Activated CD4-positive, alpha-beta T cell treated with anti-CD3 and anti-CD28 coated beads for 36 hours (primary cell): ENCODE measurements at regions of chr9 and their contacts with region 1.

Region 1: DNA sequence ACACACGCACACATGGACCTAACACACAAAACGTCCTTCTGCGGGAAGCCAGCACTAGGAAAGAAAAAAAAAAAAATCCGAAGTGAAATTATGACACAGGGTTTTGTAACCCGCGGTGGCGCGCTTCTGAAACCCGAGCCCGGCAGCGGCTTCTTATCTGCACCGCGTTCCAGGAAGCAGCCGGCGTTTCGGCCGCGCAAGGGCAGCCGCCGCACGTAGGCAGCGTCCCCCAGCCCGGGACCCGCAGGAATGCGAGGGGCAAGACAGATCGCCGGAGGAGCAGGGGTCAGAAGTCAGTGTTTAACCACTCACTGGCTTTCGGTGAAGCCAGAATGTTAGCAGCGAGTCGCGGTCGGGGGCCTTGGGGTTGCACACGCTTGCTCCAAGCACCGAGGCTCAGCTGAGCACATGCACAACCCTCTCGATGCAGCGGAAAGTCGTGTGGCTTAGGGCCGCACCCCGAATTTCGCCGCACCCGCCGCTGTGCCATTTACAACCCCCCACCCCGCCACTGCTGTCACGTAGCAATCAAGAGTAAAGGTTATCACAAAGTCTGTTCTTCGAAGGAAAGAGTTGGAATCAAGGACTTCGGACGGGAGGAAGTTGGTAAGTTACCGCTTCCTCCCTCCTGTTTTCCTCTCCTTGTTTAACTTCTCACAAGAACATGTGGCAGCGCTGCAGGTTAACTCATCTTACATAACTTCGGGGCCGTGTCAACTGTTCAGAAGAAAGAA is 167.9 kb downstream of the AUH start:
- DNase-seq: peak; percentile 92
- ATAC-seq: peak; percentile 62
- H3K4me3 Mint-ChIP-seq: peak overlapping the region; percentile 65
- H3K27ac Mint-ChIP-seq: peak overlapping the region; percentile 94
- H3K4me1 Mint-ChIP-seq: peaks cover 74% of the 10 kb centered on the region
- H3K27me3 Mint-ChIP-seq: no peaks in the 10 kb centered on the region

Region 2: GRCh38 chr9:90964101-90965020 is 229.5 kb before region 1 on chr9:
- CTCF ChIA-PET with region 1: interaction called, 3 read pairs
- POLR2A ChIA-PET with region 1: no interaction called
- intact Hi-C with region 1: loop called in 1 of 2 experiments (anchors 1 kb)
- DNase-seq: peak; percentile 48
- ATAC-seq: peak; percentile 47
- H3K4me3 Mint-ChIP-seq: no peak overlapping the region
- H3K27ac Mint-ChIP-seq: no peak overlapping the region
- H3K4me1 Mint-ChIP-seq: peaks cover 37% of the 10 kb centered on the region
- H3K27me3 Mint-ChIP-seq: peaks cover 26% of the 10 kb centered on the region

Region 3: DNA sequence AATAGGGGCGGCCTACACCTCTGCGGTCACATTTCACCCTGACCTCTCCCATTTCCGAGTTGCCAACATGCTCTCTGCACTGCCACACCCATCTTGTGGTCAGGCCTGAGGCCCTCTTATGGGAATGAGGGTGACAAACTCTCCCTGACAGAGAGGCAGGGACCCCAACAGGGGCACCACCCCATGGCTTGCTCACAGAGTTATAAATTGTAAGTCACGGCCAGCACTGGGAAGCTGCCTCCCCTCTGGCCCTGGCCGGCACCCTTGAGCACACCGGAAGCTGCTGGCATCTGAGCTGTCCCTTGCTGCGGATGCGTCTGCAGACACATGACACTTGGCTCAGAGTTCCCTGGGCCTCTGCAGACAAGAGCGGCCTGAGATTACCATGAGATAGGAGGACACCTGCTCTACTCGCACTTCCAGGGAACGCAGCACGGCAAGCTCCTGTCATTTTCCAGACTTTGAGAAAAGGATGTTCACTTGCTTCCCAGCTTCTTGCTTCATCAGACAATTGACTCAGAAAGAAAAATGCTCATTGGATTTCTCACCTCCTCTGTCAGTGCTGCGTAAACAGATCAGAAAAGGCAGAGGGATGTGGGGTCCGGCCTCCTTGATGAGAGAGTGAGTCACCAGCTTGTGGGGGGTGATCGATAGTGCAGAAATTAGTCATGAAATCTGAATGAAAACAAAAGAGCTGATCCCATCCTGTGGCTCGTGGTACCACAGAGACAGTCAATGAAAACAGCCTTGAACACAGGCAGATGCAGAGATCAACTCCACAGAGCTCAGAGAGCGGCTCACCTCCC is 122.4 kb before region 1 on chr9:
- CTCF ChIA-PET with region 1: interaction called, 4 read pairs
- POLR2A ChIA-PET with region 1: interaction called, 9 read pairs
- intact Hi-C with region 1: loop called in 1 of 2 experiments (anchors 1 kb)
- DNase-seq: peak; percentile 88
- ATAC-seq: peak; percentile 97
- H3K4me3 Mint-ChIP-seq: peak overlapping the region; percentile 37
- H3K27ac Mint-ChIP-seq: peak overlapping the region; percentile 97
- H3K4me1 Mint-ChIP-seq: peaks cover 24% of the 10 kb centered on the region
- H3K27me3 Mint-ChIP-seq: peaks cover 7% of the 10 kb centered on the region

Region 4: GRCh38 chr9:91164724-91165520 is 28.9 kb before region 1 on chr9:
- CTCF ChIA-PET with region 1: interaction called, 4 read pairs
- POLR2A ChIA-PET with region 1: interaction called, 14 read pairs
- intact Hi-C with region 1: loop called (anchors 1 kb)
- DNase-seq: peak; percentile 91
- ATAC-seq: peak; percentile 80
- H3K4me3 Mint-ChIP-seq: peak overlapping the region; percentile 67
- H3K27ac Mint-ChIP-seq: peak overlapping the region; percentile 95
- H3K4me1 Mint-ChIP-seq: peaks cover 47% of the 10 kb centered on the region
- H3K27me3 Mint-ChIP-seq: no peaks in the 10 kb centered on the region

Region 5: GRCh38 chr9:91346652-91347051 is 152.8 kb after region 1 on chr9:
- CTCF ChIA-PET with region 1: interaction called, 3 read pairs
- POLR2A ChIA-PET with region 1: no interaction called
- intact Hi-C with region 1: loop called in 1 of 2 experiments (anchors 5 kb)
- DNase-seq: no peak
- ATAC-seq: peak; percentile 65
- H3K4me3 Mint-ChIP-seq: no peak overlapping the region
- H3K27ac Mint-ChIP-seq: peak overlapping the region; percentile 3
- H3K4me1 Mint-ChIP-seq: peaks cover 56% of the 10 kb centered on the region
- H3K27me3 Mint-ChIP-seq: no peaks in the 10 kb centered on the region

Region 6: DNA sequence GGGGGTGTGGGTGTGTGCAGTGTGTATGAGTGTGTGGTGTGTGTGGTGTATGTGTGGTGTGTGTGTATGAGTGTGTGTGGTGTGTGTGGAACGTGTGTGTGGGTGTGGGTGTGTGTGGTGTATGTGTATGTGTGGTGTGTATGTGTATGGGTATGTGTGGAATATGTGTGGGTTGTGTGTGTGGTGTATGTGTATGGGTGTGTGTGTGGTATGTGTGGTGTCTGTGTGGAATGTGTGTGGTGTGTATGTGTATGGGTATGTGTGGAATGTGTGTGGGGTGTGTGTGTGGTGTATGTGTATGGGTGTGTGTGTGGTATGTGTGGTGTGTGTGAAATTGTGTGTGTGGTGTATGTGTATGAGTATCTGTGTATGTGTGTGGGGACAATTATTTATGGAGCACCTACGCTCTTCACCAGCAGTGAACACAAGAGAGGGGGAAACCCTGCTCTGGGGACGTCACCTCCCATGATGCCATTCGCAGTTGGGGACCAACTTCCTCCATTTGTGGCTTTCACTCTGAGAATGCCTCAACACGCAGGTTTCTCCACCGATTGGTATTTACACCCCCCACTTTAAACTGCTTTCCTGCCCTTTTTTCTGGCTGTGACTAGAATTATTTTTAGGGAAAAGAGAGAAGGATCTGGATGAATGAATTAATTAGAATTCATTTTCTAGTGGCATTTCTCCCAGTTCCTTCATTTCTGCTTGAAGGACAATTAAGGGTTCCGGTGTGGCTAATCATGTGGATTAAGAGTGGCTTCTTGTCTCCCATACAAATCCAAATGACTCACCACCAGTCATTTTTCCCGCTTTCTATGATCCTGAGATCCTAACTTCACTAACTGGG is 518.2 kb after region 1 on chr9:
- CTCF ChIA-PET with region 1: no interaction called
- POLR2A ChIA-PET with region 1: no interaction called
- intact Hi-C with region 1: loop called in 1 of 2 experiments (anchors 1 kb)
- DNase-seq: peak; percentile 88
- ATAC-seq: peak; percentile 97
- H3K4me3 Mint-ChIP-seq: no peak overlapping the region
- H3K27ac Mint-ChIP-seq: peak overlapping the region; percentile 26
- H3K4me1 Mint-ChIP-seq: no peaks in the 10 kb centered on the region
- H3K27me3 Mint-ChIP-seq: peaks cover 24% of the 10 kb centered on the region

Region 7: GRCh38 chr9:92463984-92464383 is 1270.2 kb after region 1 on chr9:
- CTCF ChIA-PET with region 1: no interaction called
- POLR2A ChIA-PET with region 1: no interaction called
- intact Hi-C with region 1: no loop called
- DNase-seq: no peak
- ATAC-seq: no peak
- H3K4me3 Mint-ChIP-seq: no peak overlapping the region
- H3K27ac Mint-ChIP-seq: no peak overlapping the region
- H3K4me1 Mint-ChIP-seq: no peaks in the 10 kb centered on the region
- H3K27me3 Mint-ChIP-seq: no peaks in the 10 kb centered on the region